ENCODE measurements at regions of chr2 and their contacts with region 1.

Region 1: GRCh38 chr2:196453613-196454047 is 185.9 kb upstream of the CCDC150 start:
- DNase-seq: peak; percentile 7 to 67 (median 14)
- ATAC-seq: peak; percentile 88
- H3K4me3 ChIP-seq: no peak overlapping the region
- H3K27ac ChIP-seq: no peak overlapping the region
- H3K4me1 ChIP-seq: no peaks in the 10 kb centered on the region
- H3K27me3 ChIP-seq: no peaks in the 10 kb centered on the region
- CTCF ChIP-seq: peak; percentile 48 to 73 (median 64); a peak in 5 of 6 replicates
- EP300 ChIP-seq: no peak
- POLR2A ChIP-seq: no peak
- RAD21 ChIP-seq: peak; percentile 62 to 79

Region 2: DNA sequence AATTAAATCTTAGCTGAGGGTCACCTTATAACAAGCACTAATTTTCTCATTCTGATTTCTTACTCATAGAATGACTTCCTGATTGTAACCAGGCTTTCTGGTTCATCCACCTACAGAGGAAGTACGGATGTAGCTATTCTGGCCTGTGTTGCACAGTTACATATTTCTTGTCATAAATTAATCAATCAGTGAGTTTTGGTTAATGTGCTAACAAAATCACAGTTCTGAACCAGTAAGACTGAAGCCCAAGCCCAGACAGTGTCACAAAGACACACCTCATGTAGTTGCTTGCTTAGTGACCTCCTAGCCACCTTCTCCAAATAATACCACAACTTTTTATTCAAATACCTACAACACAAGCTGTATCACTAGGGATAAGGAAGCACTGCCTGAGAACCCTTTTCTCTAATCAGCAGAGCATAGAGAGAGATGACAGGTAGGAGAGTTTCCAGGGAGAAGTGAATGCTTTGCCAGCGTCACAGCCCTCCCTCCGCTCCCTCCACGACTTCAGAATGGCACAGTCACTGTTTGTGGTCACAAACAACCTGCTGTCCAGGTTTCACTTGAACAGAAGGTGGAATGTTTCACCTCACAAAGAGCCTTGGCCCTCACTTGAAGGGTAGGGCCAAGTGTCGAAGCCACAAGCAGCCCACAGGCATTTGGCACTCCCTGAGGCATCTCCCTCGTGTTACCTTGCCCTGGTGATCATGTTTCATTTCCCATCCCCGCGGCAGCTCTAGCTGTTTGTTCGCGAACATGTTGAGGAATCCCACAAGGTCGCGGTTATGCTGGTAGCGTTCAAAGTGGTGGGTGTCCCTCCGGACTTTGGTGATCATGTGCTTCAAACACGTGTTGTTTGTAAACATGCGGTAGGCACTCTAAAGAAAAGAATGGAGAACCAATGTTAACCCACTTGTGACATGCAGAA is 161.5 kb before region 1 on chr2:
- CTCF ChIA-PET with region 1: no interaction called
- POLR2A ChIA-PET with region 1: no interaction called
- in situ Hi-C with region 1: loop called (anchors 10 kb)
- intact Hi-C with region 1: no loop called
- DNase-seq: no peak
- ATAC-seq: no peak
- H3K4me3 ChIP-seq: no peak overlapping the region
- H3K27ac ChIP-seq: no peak overlapping the region
- H3K4me1 ChIP-seq: no peaks in the 10 kb centered on the region
- H3K27me3 ChIP-seq: no peaks in the 10 kb centered on the region
- CTCF ChIP-seq: no peak
- EP300 ChIP-seq: no peak
- POLR2A ChIP-seq: no peak
- RAD21 ChIP-seq: no peak

Region 3: GRCh38 chr2:196337208-196337953 is 116.2 kb before region 1 on chr2:
- CTCF ChIA-PET with region 1: no interaction called
- POLR2A ChIA-PET with region 1: no interaction called
- in situ Hi-C with region 1: no loop called
- intact Hi-C with region 1: loop called (anchors 2 kb)
- DNase-seq: peak; percentile 31 to 46 (median 41)
- ATAC-seq: peak; percentile 84
- H3K4me3 ChIP-seq: no peak overlapping the region
- H3K27ac ChIP-seq: no peak overlapping the region
- H3K4me1 ChIP-seq: no peaks in the 10 kb centered on the region
- H3K27me3 ChIP-seq: no peaks in the 10 kb centered on the region
- CTCF ChIP-seq: peak; percentile 31 to 52 (median 48); a peak in 3 of 6 replicates
- EP300 ChIP-seq: no peak
- POLR2A ChIP-seq: no peak
- RAD21 ChIP-seq: peak in 1 of 2 experiments; percentile 61; a peak in 2 of 4 replicates

Region 4: GRCh38 chr2:196383799-196384198 is 69.8 kb before region 1 on chr2:
- CTCF ChIA-PET with region 1: no interaction called
- POLR2A ChIA-PET with region 1: no interaction called
- in situ Hi-C with region 1: no loop called
- intact Hi-C with region 1: loop called (anchors 1 kb)
- DNase-seq: no peak
- ATAC-seq: no peak
- H3K4me3 ChIP-seq: no peak overlapping the region
- H3K27ac ChIP-seq: no peak overlapping the region
- H3K4me1 ChIP-seq: peaks cover 0 to 14% of the 10 kb centered on the region in 2 experiments; a peak in 3 of 5 replicates
- H3K27me3 ChIP-seq: no peaks in the 10 kb centered on the region
- CTCF ChIP-seq: no peak
- EP300 ChIP-seq: no peak
- POLR2A ChIP-seq: no peak
- RAD21 ChIP-seq: no peak

Region 5: GRCh38 chr2:196399722-196400691 is 53.6 kb before region 1 on chr2:
- CTCF ChIA-PET with region 1: no interaction called
- POLR2A ChIA-PET with region 1: no interaction called
- in situ Hi-C with region 1: no loop called
- intact Hi-C with region 1: loop called (anchors 2 kb)
- DNase-seq: peak in 2 of 4 experiments; percentile 30 to 67
- ATAC-seq: peak; percentile 93
- H3K4me3 ChIP-seq: no peak overlapping the region
- H3K27ac ChIP-seq: peak overlapping the region; percentile 65
- H3K4me1 ChIP-seq: peaks cover 0 to 13% of the 10 kb centered on the region in 2 experiments; a peak in 2 of 5 replicates
- H3K27me3 ChIP-seq: no peaks in the 10 kb centered on the region
- CTCF ChIP-seq: no peak
- EP300 ChIP-seq: peak; percentile 99
- POLR2A ChIP-seq: no peak
- RAD21 ChIP-seq: peak in 1 of 2 experiments; percentile 21; a peak in 1 of 4 replicates

Region 6: GRCh38 chr2:196750982-196751635 is 297.5 kb after region 1 on chr2:
- CTCF ChIA-PET with region 1: no interaction called
- POLR2A ChIA-PET with region 1: no interaction called
- in situ Hi-C with region 1: no loop called
- intact Hi-C with region 1: loop called (anchors 10 kb)
- DNase-seq: peak; percentile 34 to 59 (median 43)
- ATAC-seq: peak; percentile 92
- H3K4me3 ChIP-seq: no peak overlapping the region
- H3K27ac ChIP-seq: no peak overlapping the region
- H3K4me1 ChIP-seq: no peaks in the 10 kb centered on the region
- H3K27me3 ChIP-seq: no peaks in the 10 kb centered on the region
- CTCF ChIP-seq: peak; percentile 69 to 85 (median 71)
- EP300 ChIP-seq: no peak
- POLR2A ChIP-seq: no peak
- RAD21 ChIP-seq: no peak